Right ventricle myocardium inferior (tissue), 1 donor: ENCODE measurements at regions of chr13 and their contacts with region 1.

Region 1: GRCh38 chr13:103203735-103204330 is 137.6 kb upstream of the SLC10A2 start:
- DNase-seq: no peak
- ATAC-seq: no peak

Region 2: GRCh38 chr13:103100830-103101229 is 103.0 kb before region 1 on chr13:
- intact Hi-C with region 1: no loop called
- DNase-seq: no peak
- ATAC-seq: no peak

Region 3: GRCh38 chr13:103354171-103354570 is 150.3 kb after region 1 on chr13:
- intact Hi-C with region 1: no loop called
- DNase-seq: no peak
- ATAC-seq: no peak

Region 4: GRCh38 chr13:103373916-103374315 is 170.1 kb after region 1 on chr13:
- intact Hi-C with region 1: no loop called
- DNase-seq: no peak
- ATAC-seq: no peak

Region 5: GRCh38 chr13:103726808-103727207 is 523.0 kb after region 1 on chr13:
- intact Hi-C with region 1: loop called (anchors 5 kb)
- DNase-seq: no peak
- ATAC-seq: no peak